ENCODE measurements at regions of chr7 and their contacts with region 1.

Region 1: GRCh38 chr7:51162724-51163329 is 153.8 kb downstream of the COBL start:
- DNase-seq: peak; percentile 26
- H3K4me3 ChIP-seq: no peak overlapping the region
- H3K27ac ChIP-seq: no peak overlapping the region
- H3K27me3 ChIP-seq: peaks cover 6% of the 10 kb centered on the region
- CTCF ChIP-seq: peak; percentile 93

Region 2: GRCh38 chr7:50056131-50056530 is 1106.7 kb before region 1 on chr7:
- CTCF ChIA-PET with region 1: no interaction called
- POLR2A ChIA-PET with region 1: no interaction called
- DNase-seq: no peak
- H3K4me3 ChIP-seq: no peak overlapping the region
- H3K27ac ChIP-seq: no peak overlapping the region
- H3K27me3 ChIP-seq: no peaks in the 10 kb centered on the region
- CTCF ChIP-seq: no peak

Region 3: DNA sequence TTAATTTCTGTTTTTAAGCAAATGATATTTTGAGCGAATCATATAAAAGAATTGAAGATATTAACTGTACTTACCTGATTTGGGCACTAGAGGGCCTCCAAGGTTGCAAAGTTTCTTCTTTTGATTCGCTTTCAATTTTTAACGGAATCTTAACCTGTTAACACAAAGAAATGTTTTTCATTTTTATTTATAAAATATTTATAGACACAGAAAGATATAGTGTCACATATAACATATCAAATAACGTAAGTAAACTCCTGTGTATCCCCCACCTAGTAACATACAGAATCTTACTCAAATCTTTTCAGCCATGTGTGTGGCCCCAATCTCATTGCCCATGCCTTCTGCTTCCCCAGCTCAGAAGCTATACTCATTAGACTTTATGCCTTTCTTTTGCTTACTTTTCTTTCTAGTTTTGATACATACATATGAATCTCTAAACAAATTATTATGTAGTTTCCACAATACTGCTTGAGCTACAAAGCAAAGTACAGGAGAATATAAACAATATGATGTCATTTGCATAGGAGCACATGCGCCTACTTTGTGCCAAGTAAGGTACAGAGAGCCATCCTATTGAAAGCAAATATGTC is 1020.3 kb before region 1 on chr7:
- CTCF ChIA-PET with region 1: interaction called, 55 read pairs
- POLR2A ChIA-PET with region 1: no interaction called
- DNase-seq: no peak
- H3K4me3 ChIP-seq: no peak overlapping the region
- H3K27ac ChIP-seq: no peak overlapping the region
- H3K27me3 ChIP-seq: no peaks in the 10 kb centered on the region
- CTCF ChIP-seq: peak; percentile 71

Region 4: DNA sequence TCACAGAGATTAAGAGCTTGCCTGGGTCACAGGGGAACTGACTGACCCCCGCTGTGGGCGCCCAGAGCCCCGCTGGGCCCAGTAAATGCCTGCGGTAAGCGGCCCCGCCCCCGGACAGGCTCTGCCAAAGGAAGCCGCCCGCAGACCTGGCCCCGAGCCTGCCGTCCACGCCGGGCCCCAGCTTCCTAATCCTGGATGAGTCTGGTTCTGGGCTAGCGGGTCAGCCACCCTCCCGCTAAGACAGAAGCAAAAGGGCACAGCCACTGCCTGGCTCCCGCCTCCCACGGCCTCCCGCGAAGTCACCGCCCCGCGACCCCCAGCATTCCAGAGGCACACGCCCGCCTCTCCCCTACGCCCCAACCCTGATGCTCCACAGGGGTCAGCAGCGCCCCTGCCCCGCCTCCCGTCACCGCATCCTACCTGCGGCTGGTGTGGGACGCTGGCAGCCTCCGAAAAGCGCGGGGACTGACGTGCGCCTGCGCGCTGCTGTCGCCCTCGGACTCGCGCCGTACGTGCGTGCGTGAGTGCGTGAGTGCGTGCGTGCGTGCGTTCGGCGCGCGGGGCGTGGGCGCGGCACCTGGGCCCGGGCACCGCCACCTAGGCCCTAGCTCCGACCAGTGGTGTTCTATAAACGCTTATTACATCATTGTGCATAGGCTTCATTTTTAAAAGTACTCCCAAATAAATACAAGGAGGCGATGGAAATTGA is 712.8 kb before region 1 on chr7 and contains the start of gene FIGNL1:
- CTCF ChIA-PET with region 1: interaction called, 34 read pairs
- POLR2A ChIA-PET with region 1: no interaction called
- DNase-seq: peak; percentile 24
- H3K4me3 ChIP-seq: peak within 1 kb of the TSS; percentile 90
- H3K27ac ChIP-seq: peak within 1 kb of the TSS; percentile 39
- H3K27me3 ChIP-seq: peaks cover 2% of the 10 kb centered on the region
- CTCF ChIP-seq: no peak
- polyA plus RNA-seq, gene FIGNL1: 7.1 and 9.5 TPM in 2 replicates

Region 5: GRCh38 chr7:50696810-50697582 is 465.8 kb before region 1 on chr7:
- CTCF ChIA-PET with region 1: interaction called, 10 read pairs
- POLR2A ChIA-PET with region 1: no interaction called
- DNase-seq: no peak
- H3K4me3 ChIP-seq: no peak overlapping the region
- H3K27ac ChIP-seq: no peak overlapping the region
- H3K27me3 ChIP-seq: no peaks in the 10 kb centered on the region
- CTCF ChIP-seq: peak; percentile 45

Region 6: DNA sequence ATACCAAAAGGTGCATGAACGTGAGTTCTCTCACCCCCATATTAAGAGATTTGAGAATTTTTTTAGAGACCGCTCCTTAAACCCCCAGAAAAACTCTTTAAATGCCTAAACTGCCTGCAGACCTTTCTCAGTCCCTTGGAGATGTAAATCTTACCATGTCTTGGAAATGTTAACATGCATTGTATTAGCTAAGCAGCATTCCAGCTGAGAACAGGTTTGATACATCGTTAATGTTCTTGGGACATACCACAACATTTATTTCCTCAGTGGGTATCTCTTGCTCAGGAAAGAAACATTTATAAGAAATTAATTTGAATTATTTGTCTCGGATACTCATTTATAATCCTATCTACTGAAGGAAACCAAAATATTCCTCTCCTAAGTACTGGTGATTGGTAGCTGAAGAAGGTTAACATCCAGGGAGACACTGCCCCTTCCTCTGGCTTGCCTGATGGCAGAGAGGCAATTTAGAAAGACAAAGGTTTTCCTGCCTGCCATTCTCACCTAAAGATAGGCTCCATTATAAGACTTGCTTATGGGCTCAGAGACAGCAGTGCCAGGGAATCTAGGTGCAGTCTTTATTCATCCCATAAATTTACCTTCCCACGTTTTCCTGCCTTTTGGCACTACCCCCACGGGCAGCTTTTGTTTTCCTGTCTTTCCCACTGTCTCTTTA is 12.6 kb after region 1 on chr7:
- CTCF ChIA-PET with region 1: interaction called, 81 read pairs
- POLR2A ChIA-PET with region 1: no interaction called
- DNase-seq: no peak
- H3K4me3 ChIP-seq: no peak overlapping the region
- H3K27ac ChIP-seq: no peak overlapping the region
- H3K27me3 ChIP-seq: no peaks in the 10 kb centered on the region
- CTCF ChIP-seq: no peak

Region 7: DNA sequence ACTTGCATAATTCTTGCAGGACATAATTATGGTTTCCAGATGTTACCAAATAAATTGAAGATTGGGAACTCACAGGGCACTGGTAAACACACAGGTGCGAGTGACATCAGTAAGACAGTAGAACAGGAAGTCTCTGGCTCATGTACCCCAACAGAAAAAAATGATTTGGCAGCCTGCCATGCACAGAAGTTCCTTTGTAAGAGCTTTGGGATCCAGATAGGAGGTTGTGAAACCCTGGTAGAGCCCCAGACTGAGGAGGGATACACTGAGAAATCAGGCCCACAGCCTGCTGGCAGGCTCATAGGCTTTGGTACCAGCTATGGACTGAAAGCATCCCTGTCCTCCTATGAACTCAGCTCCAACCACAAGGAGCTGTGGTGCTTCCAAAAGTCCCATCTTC is 35.8 kb after region 1 on chr7:
- CTCF ChIA-PET with region 1: interaction called, 23 read pairs
- POLR2A ChIA-PET with region 1: no interaction called
- DNase-seq: no peak
- H3K4me3 ChIP-seq: no peak overlapping the region
- H3K27ac ChIP-seq: no peak overlapping the region
- H3K27me3 ChIP-seq: no peaks in the 10 kb centered on the region
- CTCF ChIP-seq: no peak

Region 8: DNA sequence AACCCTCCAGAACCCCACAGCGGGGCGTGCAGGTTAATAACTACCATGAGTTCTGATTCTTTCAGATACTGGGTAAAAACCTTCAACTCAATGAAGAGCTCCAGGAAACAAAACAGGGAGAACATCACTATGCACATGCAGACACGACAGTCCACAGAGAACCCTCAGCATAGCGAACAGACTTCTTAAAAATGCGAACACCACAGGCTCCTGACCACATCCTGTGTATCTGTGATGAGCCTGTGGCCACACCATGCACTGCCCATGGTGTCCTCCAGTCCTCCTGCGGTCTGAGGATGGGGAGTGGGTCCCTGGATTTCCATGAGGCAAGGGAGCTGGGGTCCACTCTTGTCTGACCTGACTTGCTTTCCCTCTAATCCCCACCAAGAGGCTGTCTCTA is 46.6 kb after region 1 on chr7:
- CTCF ChIA-PET with region 1: no interaction called
- POLR2A ChIA-PET with region 1: no interaction called
- DNase-seq: no peak
- H3K4me3 ChIP-seq: no peak overlapping the region
- H3K27ac ChIP-seq: no peak overlapping the region
- H3K27me3 ChIP-seq: no peaks in the 10 kb centered on the region
- CTCF ChIP-seq: no peak

Measured in AG04450 (cell line).